K562 (cell line): ENCODE measurements at regions of chr1 and their contacts with region 1.

Region 1: GRCh38 chr1:230797942-230798418 is 50.8 kb downstream of the CAPN9 start:
- DNase-seq: peak; percentile 48 to 74 (median 62)
- ATAC-seq: peak; percentile 95
- H3K4me3 ChIP-seq: no peak overlapping the region
- H3K27ac ChIP-seq: no peak overlapping the region
- H3K4me1 ChIP-seq: no peaks in the 10 kb centered on the region
- H3K27me3 ChIP-seq: peaks cover 22 to 68% of the 10 kb centered on the region in 2 experiments
- CTCF ChIP-seq: peak; percentile 79 to 84 (median 82)
- EP300 ChIP-seq: no peak
- POLR2A ChIP-seq: no peak
- RAD21 ChIP-seq: peak; percentile 90 to 98

Region 2: DNA sequence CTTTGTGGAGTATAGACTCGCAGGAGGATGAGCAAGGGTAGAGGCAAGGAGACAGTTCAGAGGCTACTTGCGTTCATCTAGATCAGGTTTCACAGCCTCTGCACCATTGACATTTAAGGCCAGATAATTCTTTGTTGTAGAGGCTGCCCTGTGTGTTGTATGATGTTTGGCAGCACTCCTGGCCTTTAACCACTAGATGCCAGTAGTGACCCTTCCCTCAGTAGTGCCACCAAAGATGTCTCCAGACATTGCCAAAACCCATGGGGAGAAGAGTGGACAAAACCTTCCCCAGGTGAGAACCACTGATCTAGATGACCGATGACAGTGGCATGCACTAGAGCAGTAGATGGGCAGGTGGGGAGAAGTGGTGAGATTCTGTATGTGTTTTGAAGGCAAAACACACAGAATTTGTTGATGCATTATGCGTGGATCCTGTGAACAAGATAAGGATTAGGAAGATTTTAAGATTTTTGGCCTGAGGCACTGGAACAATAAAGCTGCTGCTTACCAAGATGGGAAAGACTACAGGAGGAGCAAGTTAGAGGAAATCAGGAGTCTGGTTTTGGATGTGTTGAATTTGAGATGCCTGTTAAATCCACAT is 165.6 kb before region 1 on chr1:
- CTCF ChIA-PET with region 1: no interaction called
- POLR2A ChIA-PET with region 1: no interaction called
- in situ Hi-C with region 1: no loop called
- intact Hi-C with region 1: loop called (anchors 5 kb)
- DNase-seq: peak in 2 of 4 experiments; percentile 24 to 47
- ATAC-seq: peak; percentile 91
- H3K4me3 ChIP-seq: no peak overlapping the region
- H3K27ac ChIP-seq: no peak overlapping the region
- H3K4me1 ChIP-seq: no peaks in the 10 kb centered on the region
- H3K27me3 ChIP-seq: peaks cover 4 to 12% of the 10 kb centered on the region in 2 experiments; a peak in 3 of 5 replicates
- CTCF ChIP-seq: peak; percentile 62 to 78 (median 70)
- EP300 ChIP-seq: no peak
- POLR2A ChIP-seq: no peak
- RAD21 ChIP-seq: peak; percentile 60 to 77

Region 3: DNA sequence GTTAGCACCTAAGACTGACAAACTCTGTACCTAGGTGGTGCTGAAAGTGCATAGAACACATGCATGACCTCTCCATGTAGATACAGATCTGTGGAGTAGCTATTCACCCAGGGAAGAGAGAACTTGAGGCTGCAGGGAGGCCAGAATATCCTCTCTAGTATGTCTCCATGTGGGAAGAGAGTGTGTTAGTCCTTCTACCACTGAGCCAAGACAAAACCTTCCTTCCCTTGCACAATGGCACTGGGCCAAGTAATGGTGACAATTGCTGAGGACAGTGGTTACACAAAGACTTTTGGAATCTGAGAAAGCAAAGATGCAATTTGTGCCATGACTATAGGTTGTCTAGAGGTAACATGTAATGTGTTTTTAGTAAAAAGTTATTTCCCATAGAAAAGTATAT is 18.0 kb after region 1 on chr1:
- CTCF ChIA-PET with region 1: no interaction called
- POLR2A ChIA-PET with region 1: no interaction called
- in situ Hi-C with region 1: no loop called
- intact Hi-C with region 1: no loop called
- DNase-seq: no peak
- ATAC-seq: no peak
- H3K4me3 ChIP-seq: no peak overlapping the region
- H3K27ac ChIP-seq: no peak overlapping the region
- H3K4me1 ChIP-seq: no peaks in the 10 kb centered on the region
- H3K27me3 ChIP-seq: peaks cover 15 to 22% of the 10 kb centered on the region in 2 experiments; a peak in 4 of 5 replicates
- CTCF ChIP-seq: no peak
- EP300 ChIP-seq: no peak
- POLR2A ChIP-seq: no peak
- RAD21 ChIP-seq: no peak

Region 4: GRCh38 chr1:230978491-230979388 is 180.8 kb after region 1 on chr1 and contains the starts of genes ARV1 and TTC13:
- CTCF ChIA-PET with region 1: no interaction called
- POLR2A ChIA-PET with region 1: no interaction called
- in situ Hi-C with region 1: no loop called
- intact Hi-C with region 1: loop called (anchors 5 kb)
- DNase-seq: peak; percentile 99 to 100 (median 99)
- ATAC-seq: peak; percentile 99
- H3K4me3 ChIP-seq: peak within 1 kb of the TSS; percentile 62
- H3K27ac ChIP-seq: peak within 1 kb of the TSS; percentile 75
- H3K4me1 ChIP-seq: peaks cover 21 to 40% of the 10 kb centered on the region in 2 experiments; a peak in 4 of 5 replicates
- H3K27me3 ChIP-seq: no peaks in the 10 kb centered on the region
- CTCF ChIP-seq: peak; percentile 38 to 53 (median 52); a peak in 5 of 6 replicates
- EP300 ChIP-seq: peak; percentile 33; the same call in 1 of the 2 replicates
- POLR2A ChIP-seq: peak; percentile 97
- RAD21 ChIP-seq: peak; percentile 21 to 41; a peak in 3 of 4 replicates
- polyA plus RNA-seq, gene ARV1: 61.9 to 71.0 TPM
- polyA plus RNA-seq, gene TTC13: 1.7 to 2.2 TPM

Region 5: DNA sequence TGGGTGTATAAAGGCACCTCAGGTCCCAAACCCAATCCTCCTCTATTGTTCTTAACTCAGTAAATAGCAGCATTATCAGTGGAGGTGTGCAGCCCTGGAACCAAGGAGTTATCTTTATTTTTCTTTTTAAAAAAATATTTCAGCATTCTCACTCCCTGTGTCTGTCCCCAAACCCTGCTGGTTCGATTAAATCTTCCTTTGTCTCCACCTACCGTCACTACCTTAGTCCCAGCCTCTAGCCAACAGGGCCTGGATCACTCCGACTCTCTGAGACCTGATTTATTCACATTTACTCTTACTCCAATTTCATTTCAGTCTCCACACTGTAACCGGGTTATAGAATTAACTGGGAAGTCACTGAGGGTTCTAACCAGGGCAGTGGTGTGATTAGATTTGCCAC is 281.2 kb after region 1 on chr1:
- CTCF ChIA-PET with region 1: no interaction called
- POLR2A ChIA-PET with region 1: no interaction called
- in situ Hi-C with region 1: no loop called
- intact Hi-C with region 1: loop called (anchors 2 kb)
- DNase-seq: no peak
- ATAC-seq: peak; percentile 89
- H3K4me3 ChIP-seq: no peak overlapping the region
- H3K27ac ChIP-seq: no peak overlapping the region
- H3K4me1 ChIP-seq: 0 out of 5 replicates have a peak, but pooled peaks cover 0 to 4% of the 10 kb centered on the region in 2 experiments
- H3K27me3 ChIP-seq: no peaks in the 10 kb centered on the region; a peak in 1 of 5 replicates
- CTCF ChIP-seq: peak; percentile 12 to 49 (median 29); a peak in 2 of 6 replicates
- EP300 ChIP-seq: no peak
- POLR2A ChIP-seq: no peak
- RAD21 ChIP-seq: peak; percentile 48 to 72; a peak in 3 of 4 replicates

Region 6: GRCh38 chr1:231211005-231211857 is 413.3 kb after region 1 on chr1:
- CTCF ChIA-PET with region 1: interaction called, 16 read pairs
- POLR2A ChIA-PET with region 1: no interaction called
- in situ Hi-C with region 1: loop called (anchors 5 kb)
- intact Hi-C with region 1: loop called (anchors 1 kb)
- DNase-seq: peak; percentile 86 to 92 (median 90)
- ATAC-seq: peak; percentile 93
- H3K4me3 ChIP-seq: peak overlapping the region; percentile 32
- H3K27ac ChIP-seq: no peak overlapping the region
- H3K4me1 ChIP-seq: peaks cover 0 to 17% of the 10 kb centered on the region in 2 experiments; a peak in 3 of 5 replicates
- H3K27me3 ChIP-seq: peaks cover 10 to 18% of the 10 kb centered on the region in 2 experiments; a peak in 3 of 5 replicates
- CTCF ChIP-seq: peak; percentile 94 to 98 (median 98)
- EP300 ChIP-seq: no peak
- POLR2A ChIP-seq: no peak
- RAD21 ChIP-seq: peak; percentile 99